ENCODE measurements at regions of chr20 and their contacts with region 1.

Region 1: GRCh38 chr20:10673988-10674711 is at the start of gene JAG1:
- DNase-seq: peak; percentile 93 to 97
- H3K4me3 ChIP-seq: peak within 1 kb of the TSS; percentile 72 to 88
- H3K27ac ChIP-seq: peak within 1 kb of the TSS; percentile 99 to 100
- H3K4me1 ChIP-seq: no peaks in the 10 kb centered on the region
- H3K27me3 ChIP-seq: no peaks in the 10 kb centered on the region
- CTCF ChIP-seq: peak in 1 of 4 experiments; percentile 9
- POLR2A ChIP-seq: peak; percentile 86 to 92
- total RNA-seq, gene JAG1: 53.8 to 154 (median 111) TPM

Region 2: DNA sequence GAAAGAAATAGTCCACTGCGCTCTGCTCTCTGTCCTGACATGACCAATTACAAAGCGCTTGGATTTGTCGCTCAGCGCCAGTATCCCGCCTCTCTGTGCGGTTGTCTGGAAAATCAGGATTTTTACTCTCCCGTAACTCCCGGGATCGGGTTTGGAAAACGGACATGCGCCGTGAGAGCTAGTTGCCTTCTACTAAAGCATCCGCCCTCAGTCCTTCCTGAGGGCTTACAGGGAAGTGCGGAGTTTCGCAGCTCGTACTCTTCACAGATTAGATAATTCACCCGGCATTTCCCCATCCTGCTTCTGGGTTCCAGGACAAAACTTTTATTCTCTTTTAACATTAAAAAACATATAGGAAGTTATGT is 239.7 kb before region 1 on chr20:
- intact Hi-C with region 1: loop called (anchors 10 kb)
- DNase-seq: peak; percentile 93 to 96
- H3K4me3 ChIP-seq: peak overlapping the region; percentile 86 to 99
- H3K27ac ChIP-seq: peak overlapping the region; percentile 85 to 98
- H3K4me1 ChIP-seq: no peaks in the 10 kb centered on the region
- H3K27me3 ChIP-seq: no peaks in the 10 kb centered on the region
- CTCF ChIP-seq: no peak
- POLR2A ChIP-seq: peak; percentile 66 to 79

Region 3: DNA sequence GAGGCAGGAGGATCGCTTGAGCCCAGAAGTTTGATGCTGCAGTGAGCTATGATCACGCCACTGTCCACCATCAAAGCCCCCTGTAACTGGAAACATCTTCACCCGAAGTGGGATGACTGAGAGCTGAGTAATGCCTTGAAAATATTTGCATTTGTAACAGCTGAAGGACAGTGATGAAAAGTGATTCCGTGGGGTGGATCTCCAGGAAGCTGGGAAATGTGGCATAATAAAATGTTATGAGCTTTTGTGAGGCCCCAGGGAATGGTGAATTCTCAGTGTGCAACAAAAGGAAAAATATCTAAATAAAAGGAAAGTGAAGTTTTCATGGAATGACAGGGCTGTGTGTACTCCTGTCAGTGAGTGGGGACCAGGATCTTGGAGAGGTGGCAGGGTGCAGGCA is 92.3 kb before region 1 on chr20:
- intact Hi-C with region 1: no loop called
- DNase-seq: no peak
- H3K4me3 ChIP-seq: no peak overlapping the region
- H3K27ac ChIP-seq: no peak overlapping the region
- H3K4me1 ChIP-seq: no peaks in the 10 kb centered on the region
- H3K27me3 ChIP-seq: no peaks in the 10 kb centered on the region
- CTCF ChIP-seq: no peak
- POLR2A ChIP-seq: no peak

Region 4: DNA sequence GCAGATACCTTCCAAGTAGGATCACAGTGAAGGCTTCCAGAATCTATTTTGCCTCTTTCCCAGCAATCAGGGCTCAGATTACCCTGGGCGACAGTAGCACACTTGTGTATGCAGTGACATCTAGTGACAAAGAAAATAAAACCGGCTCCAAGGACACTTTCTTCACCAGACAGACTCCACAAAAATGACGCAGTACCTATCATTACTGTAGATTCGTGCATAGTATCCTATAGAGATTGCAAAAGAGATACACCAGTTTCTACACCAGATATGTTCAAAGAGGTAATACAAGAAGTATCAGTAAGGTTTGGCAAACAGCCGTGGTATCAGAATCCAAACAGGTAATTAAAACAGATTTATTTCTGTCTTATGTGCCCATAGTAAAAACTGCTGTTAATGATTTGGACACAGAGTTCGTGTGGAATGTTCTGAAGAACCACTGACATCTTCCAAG is 600.0 kb after region 1 on chr20:
- intact Hi-C with region 1: loop called (anchors 10 kb)
- DNase-seq: peak in 1 of 2 donors; percentile 31
- H3K4me3 ChIP-seq: no peak overlapping the region
- H3K27ac ChIP-seq: no peak overlapping the region
- H3K4me1 ChIP-seq: no peaks in the 10 kb centered on the region
- H3K27me3 ChIP-seq: no peaks in the 10 kb centered on the region
- CTCF ChIP-seq: peak; percentile 25 to 60 (median 47)
- POLR2A ChIP-seq: no peak

Measured in uterus (tissue), 4 donors.